ENCODE measurements at regions of chr17 and their contacts with region 1.

Region 1: GRCh38 chr17:42388381-42389134 is at the start of gene STAT3:
- DNase-seq: peak; percentile 100
- H3K4me3 Mint-ChIP-seq: peak within 1 kb of the TSS; percentile 88
- H3K27ac Mint-ChIP-seq: peak within 1 kb of the TSS; percentile 99
- H3K4me1 Mint-ChIP-seq: peaks cover 57% of the 10 kb centered on the region
- H3K27me3 Mint-ChIP-seq: no peaks in the 10 kb centered on the region
- total RNA-seq, gene STAT3: 194 to 198 TPM

Region 2: GRCh38 chr17:42248351-42249179 is 140.0 kb before region 1 on chr17:
- CTCF ChIA-PET with region 1: no interaction called
- POLR2A ChIA-PET with region 1: interaction called, 6 read pairs
- intact Hi-C with region 1: loop called (anchors 2 kb)
- DNase-seq: peak; percentile 88
- H3K4me3 Mint-ChIP-seq: peak overlapping the region; percentile 73
- H3K27ac Mint-ChIP-seq: peak overlapping the region; percentile 95
- H3K4me1 Mint-ChIP-seq: peaks cover 68% of the 10 kb centered on the region
- H3K27me3 Mint-ChIP-seq: no peaks in the 10 kb centered on the region

Region 3: DNA sequence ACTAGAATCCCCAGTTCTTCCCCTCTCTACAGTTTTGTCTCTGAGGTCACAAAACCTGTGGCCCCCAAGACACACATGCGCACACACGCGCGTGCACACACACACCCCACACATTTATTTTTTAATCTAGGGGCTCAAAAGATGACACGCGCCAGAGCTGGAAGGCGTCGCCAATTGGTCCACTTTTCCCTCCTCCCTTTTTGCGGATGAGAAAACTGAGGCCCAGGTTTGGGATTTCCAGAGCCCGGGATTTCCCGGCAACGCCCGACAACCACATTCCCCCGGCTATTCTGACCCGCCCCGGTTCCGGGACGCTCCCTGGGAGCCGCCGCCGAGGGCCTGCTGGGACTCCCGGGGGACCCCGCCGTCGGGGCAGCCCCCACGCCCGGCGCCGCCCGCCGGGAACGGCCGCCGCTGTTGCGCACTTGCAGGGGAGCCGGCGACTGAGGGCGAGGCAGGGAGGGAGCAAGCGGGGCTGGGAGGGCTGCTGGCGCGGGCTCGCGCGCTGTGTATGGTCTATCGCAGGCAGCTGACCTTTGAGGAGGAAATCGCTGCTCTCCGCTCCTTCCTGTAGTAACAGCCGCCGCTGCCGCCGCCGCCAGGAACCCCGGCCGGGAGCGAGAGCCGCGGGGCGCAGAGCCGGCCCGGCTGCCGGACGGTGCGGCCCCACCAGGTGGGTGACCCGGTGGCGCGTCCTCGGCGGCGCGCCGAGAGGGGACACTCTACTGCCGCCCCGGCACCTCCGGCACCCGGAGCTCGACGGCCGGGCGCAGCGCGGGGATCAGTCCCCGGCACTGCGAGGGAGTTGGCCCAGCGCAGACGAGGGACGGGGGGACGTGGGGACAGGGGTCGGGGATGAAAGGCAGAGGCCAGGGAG is 100.4 kb before region 1 on chr17 and contains the start of gene STAT5A:
- CTCF ChIA-PET with region 1: interaction called, 4 read pairs
- POLR2A ChIA-PET with region 1: interaction called, 18 read pairs
- intact Hi-C with region 1: loop called (anchors 1 kb)
- DNase-seq: peak; percentile 86
- H3K4me3 Mint-ChIP-seq: peak within 1 kb of the TSS; percentile 82
- H3K27ac Mint-ChIP-seq: peak within 1 kb of the TSS; percentile 94
- H3K4me1 Mint-ChIP-seq: peaks cover 60% of the 10 kb centered on the region
- H3K27me3 Mint-ChIP-seq: no peaks in the 10 kb centered on the region
- total RNA-seq, gene STAT5A: 211 to 215 TPM

Region 4: DNA sequence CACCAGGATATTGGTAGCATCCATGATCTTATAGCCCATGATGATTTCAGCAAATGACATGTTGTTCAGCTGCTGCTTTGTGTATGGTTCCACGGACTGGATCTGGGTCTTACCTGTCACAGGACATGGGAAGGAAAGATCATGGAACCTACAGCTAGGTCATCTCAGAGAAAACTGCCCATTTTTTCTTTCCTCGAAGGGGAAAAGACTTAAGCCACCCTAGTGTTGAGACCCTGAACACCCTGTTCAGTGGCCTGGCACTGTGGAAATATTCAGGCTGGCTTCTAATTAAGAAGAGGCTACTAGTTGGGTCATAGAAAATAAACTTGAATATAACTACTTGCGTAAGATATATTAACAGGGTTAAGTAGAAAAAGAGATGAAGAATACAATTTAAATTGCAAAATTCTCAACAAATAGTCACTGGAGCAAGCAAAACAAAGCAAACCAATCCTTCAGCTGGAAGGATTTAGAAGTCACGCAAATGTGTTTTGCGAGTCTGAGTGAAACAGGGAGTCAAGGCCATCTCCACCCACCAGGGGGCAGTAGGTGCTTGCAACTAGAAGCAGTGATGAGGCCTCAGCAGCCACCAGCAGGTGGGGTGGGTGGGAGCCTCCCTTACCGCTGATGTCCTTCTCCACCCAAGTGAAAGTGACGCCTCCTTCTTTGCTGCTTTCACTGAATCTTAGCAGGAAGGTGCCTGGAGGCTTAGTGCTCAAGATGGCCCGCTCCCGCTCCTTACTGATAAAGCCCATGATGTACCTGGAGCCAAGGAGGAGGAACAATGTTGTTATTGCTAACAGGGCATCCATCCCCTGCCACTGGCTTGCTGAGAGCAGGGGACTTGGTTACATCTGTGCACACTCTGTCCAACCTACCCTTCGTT is 65.9 kb before region 1 on chr17:
- CTCF ChIA-PET with region 1: interaction called, 19 read pairs
- POLR2A ChIA-PET with region 1: interaction called, 3 read pairs
- intact Hi-C with region 1: loop called (anchors 5 kb)
- DNase-seq: peak; percentile 96
- H3K4me3 Mint-ChIP-seq: no peak overlapping the region
- H3K27ac Mint-ChIP-seq: peak overlapping the region; percentile 67
- H3K4me1 Mint-ChIP-seq: peaks cover 37% of the 10 kb centered on the region
- H3K27me3 Mint-ChIP-seq: no peaks in the 10 kb centered on the region

Region 5: DNA sequence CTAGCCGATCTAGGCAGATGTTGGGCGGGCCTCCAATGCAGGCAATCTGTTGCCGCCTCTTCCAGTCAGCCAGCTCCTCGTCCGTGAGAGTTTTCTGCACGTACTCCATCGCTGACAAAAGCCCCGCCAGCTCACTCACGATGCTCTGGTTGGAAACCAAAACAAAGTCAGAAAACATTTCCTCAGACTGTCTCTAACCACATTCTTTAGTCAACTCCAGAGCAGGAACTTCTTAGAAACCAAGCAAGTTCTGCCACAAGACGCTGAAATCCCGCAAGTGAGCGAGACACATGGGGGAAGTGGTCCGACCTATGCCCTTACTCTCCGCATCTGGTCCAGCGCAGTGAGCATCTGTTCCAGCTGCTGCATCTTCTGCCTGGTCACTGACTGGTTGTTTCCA is 51.1 kb before region 1 on chr17:
- CTCF ChIA-PET with region 1: interaction called, 13 read pairs
- POLR2A ChIA-PET with region 1: interaction called, 36 read pairs
- intact Hi-C with region 1: loop called (anchors 1 kb)
- DNase-seq: peak; percentile 91
- H3K4me3 Mint-ChIP-seq: peak overlapping the region; percentile 60
- H3K27ac Mint-ChIP-seq: peak overlapping the region; percentile 91
- H3K4me1 Mint-ChIP-seq: peaks cover 78% of the 10 kb centered on the region
- H3K27me3 Mint-ChIP-seq: no peaks in the 10 kb centered on the region

Region 6: DNA sequence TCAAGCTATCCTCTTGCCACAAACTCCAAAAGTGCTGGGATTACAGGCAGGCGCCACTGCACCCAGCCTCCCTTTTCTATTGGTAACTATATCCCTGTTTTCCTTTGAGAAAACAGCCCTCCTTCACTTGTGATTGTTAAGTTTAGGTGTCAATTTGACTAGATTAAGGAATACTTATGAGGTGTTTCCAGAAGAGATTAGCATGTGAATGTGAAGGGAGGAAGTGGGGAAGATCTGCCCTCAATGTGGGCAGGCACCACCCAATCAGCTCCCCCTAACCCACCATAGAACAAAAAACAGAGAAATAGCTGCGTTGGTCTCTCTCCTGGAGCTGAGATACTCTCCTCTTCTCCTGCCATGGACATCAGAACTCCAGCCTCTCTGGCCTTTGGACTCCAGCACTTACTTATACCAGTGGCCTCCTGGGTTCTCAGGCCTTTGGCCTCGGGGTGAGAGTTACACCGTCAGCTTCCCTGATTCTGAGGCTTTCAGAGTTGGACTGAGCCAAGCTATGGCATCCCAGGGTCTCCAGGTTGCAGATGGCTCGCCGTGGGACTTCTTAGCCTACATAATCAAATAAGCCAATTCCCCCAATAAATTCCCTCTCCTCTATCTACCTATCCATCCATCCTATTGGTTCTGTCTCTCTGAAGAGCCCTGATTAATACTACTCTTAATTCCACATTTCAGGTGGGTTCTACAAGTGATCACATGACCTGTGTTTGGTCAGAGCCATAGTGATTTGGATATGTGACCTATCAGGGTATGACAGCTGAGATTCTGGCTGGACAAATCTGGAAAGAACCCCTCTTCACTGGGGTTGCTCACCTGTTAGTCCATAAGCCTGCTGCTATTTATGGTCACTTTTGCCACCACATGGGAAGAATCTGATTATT is 11.6 kb after region 1 on chr17:
- CTCF ChIA-PET with region 1: interaction called, 37 read pairs
- POLR2A ChIA-PET with region 1: interaction called, 11 read pairs
- intact Hi-C with region 1: no loop called
- DNase-seq: no peak
- H3K4me3 Mint-ChIP-seq: no peak overlapping the region
- H3K27ac Mint-ChIP-seq: no peak overlapping the region
- H3K4me1 Mint-ChIP-seq: peaks cover 15% of the 10 kb centered on the region
- H3K27me3 Mint-ChIP-seq: no peaks in the 10 kb centered on the region

Measured in activated CD4-positive, alpha-beta memory T cell treated with anti-CD3 and anti-CD28 coated beads for 36 hours (primary cell).